Cardiac septum (tissue), 1 donor: ENCODE measurements at regions of chr5 and their contacts with region 1.

Region 1: DNA sequence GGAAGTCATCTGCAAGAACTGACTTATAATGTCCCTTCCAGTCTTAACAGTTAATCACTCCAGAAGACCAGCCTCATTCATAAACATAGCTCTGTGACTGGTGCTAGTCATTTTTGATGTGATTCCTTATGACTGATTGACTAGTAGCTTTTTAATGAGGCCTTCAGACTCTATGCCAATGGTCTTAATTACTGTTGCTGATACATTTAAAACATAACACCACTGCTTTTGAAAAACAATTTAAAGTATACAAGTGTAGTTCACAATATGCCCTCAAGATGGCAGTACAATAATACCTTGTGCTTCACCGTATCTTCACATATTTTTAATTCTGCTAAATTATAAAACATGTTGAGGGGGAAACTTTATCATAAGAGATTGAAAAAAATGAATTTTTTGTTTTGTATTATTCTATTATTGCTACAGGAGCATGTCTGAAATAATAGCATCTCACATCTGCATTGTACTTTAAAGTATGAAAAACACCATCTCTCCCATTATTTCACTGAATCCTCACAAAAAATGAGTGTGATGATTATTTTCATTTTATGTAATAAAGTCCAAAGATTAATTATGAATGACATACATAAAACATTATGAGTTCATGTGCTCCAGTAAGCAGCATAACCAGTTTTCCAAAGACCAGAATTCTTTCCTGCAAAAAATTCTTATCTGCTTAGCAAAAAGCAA is 55.2 kb upstream of the SHISAL2B start:
- DNase-seq: no peak

Region 2: GRCh38 chr5:64784451-64785025 is 149.4 kb after region 1 on chr5:
- intact Hi-C with region 1: loop called (anchors 2 kb)
- DNase-seq: no peak